A549 (cell line): ENCODE measurements at regions of chr20 and their contacts with region 1.

Region 1: DNA sequence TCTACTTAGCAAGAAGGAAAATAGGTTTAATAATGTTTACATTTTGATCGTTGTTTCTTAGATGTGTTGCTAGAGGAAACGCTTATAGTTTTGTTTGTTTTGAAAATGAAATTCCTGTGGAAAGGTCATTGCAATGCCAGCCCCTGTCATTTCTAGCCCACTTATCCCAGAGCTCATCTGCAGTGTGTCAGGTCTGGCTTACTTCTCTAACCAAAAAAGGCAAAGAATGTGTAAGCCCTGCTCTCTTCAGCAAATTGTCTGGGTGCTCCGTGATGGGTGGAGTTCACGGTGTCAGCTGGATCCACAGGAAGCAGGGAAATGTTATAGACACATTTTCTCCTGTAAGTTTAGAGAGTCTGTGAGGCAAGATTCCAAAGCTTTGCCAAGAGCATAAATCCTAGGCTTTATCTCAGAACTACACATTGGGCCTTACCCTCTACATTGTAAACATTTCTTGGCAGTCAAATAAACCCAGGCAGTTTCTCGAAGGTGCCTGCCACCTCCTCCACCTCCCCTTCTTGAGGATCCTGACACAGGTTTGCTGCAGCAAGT is 50.9 kb downstream of the RPRD1B start:
- DNase-seq: peak in 1 of 2 experiments; percentile 29
- ATAC-seq: peak in 1 of 2 experiments; percentile 43; a peak in 2 of 6 replicates
- H3K4me3 ChIP-seq: no peak overlapping the region
- H3K27ac ChIP-seq: 0 out of 6 replicates have a peak overlapping the region, but pooled peaks of 1 of the 2 experiments have one; percentile 20
- H3K4me1 ChIP-seq: peaks cover 9% of the 10 kb centered on the region; the same call in 2 of the 3 replicates
- CTCF ChIP-seq: no peak
- EP300 ChIP-seq: no peak
- POLR2A ChIP-seq: no peak
- RAD21 ChIP-seq: no peak

Region 2: GRCh38 chr20:37990571-37991151 is 93.8 kb before region 1 on chr20:
- CTCF ChIA-PET with region 1: no interaction called
- POLR2A ChIA-PET with region 1: no interaction called
- DNase-seq: peak; percentile 15 to 52
- ATAC-seq: peak; percentile 41 to 64; a peak in 3 of 6 replicates
- H3K4me3 ChIP-seq: no peak overlapping the region
- H3K27ac ChIP-seq: peak overlapping the region; percentile 41 to 50; a peak in 2 of 6 replicates
- H3K4me1 ChIP-seq: peaks cover 72% of the 10 kb centered on the region
- CTCF ChIP-seq: no peak
- EP300 ChIP-seq: no peak
- POLR2A ChIP-seq: no peak
- RAD21 ChIP-seq: no peak

Region 3: GRCh38 chr20:38073307-38074071 is 11.0 kb before region 1 on chr20:
- CTCF ChIA-PET with region 1: interaction called, 13 read pairs
- POLR2A ChIA-PET with region 1: no interaction called
- DNase-seq: peak in 1 of 2 experiments; percentile 22
- ATAC-seq: peak in 1 of 2 experiments; percentile 26; a peak in 1 of 6 replicates
- H3K4me3 ChIP-seq: no peak overlapping the region
- H3K27ac ChIP-seq: no peak overlapping the region
- H3K4me1 ChIP-seq: no peaks in the 10 kb centered on the region
- CTCF ChIP-seq: peak; percentile 46
- EP300 ChIP-seq: no peak
- POLR2A ChIP-seq: no peak
- RAD21 ChIP-seq: peak; percentile 25 to 40; a peak in 4 of 5 replicates